HepG2 (cell line): ENCODE measurements at regions of chr9 and their contacts with region 1.

Region 1: GRCh38 chr9:34072868-34073590 is 24.3 kb upstream of the UBAP2 start:
- DNase-seq: peak; percentile 94
- ATAC-seq: peak; percentile 89
- H3K4me3 ChIP-seq: peak overlapping the region; percentile 17 to 57 (median 18); a peak in 5 of 6 replicates
- H3K27ac ChIP-seq: peak overlapping the region; percentile 69
- H3K4me1 ChIP-seq: peaks cover 49% of the 10 kb centered on the region
- H3K27me3 ChIP-seq: no peaks in the 10 kb centered on the region
- CTCF ChIP-seq: peak; percentile 7; the same call in 1 of the 2 replicates
- EP300 ChIP-seq: no peak
- POLR2A ChIP-seq: peak in 1 of 2 experiments; percentile 37; a peak in 2 of 4 replicates
- RAD21 ChIP-seq: no peak

Region 2: GRCh38 chr9:33934188-33934878 is 138.7 kb before region 1 on chr9:
- CTCF ChIA-PET with region 1: no interaction called
- POLR2A ChIA-PET with region 1: interaction called, 11 read pairs
- in situ Hi-C with region 1: no loop called
- intact Hi-C with region 1: no loop called
- DNase-seq: peak; percentile 73
- ATAC-seq: peak; percentile 66
- H3K4me3 ChIP-seq: no peak overlapping the region
- H3K27ac ChIP-seq: peak overlapping the region; percentile 58
- H3K4me1 ChIP-seq: peaks cover 71% of the 10 kb centered on the region
- H3K27me3 ChIP-seq: no peaks in the 10 kb centered on the region
- CTCF ChIP-seq: no peak
- EP300 ChIP-seq: peak in 1 of 2 experiments; percentile 83; a peak in 2 of 4 replicates
- POLR2A ChIP-seq: no peak
- RAD21 ChIP-seq: no peak

Region 3: DNA sequence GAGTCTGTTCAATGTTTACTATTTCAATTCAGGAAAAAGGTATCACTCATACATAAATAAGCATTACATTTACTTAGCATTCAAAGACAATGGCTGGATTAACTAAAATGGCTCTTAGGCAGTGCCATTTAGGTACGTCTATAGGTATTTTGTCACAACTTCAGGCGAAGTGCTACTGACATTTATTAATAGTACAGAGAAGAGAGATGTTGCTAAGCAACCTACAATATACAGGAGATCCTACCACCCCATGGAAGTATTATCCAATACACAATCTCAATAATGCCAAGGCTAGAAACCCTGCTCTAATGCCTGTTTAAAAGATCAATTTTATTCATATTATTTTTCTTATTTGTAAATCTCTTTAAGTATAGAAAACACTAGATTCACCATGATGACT is 100.3 kb before region 1 on chr9:
- CTCF ChIA-PET with region 1: no interaction called
- POLR2A ChIA-PET with region 1: no interaction called
- in situ Hi-C with region 1: no loop called
- intact Hi-C with region 1: loop called (anchors 1 kb)
- DNase-seq: no peak
- ATAC-seq: no peak
- H3K4me3 ChIP-seq: no peak overlapping the region
- H3K27ac ChIP-seq: no peak overlapping the region
- H3K4me1 ChIP-seq: peaks cover 6% of the 10 kb centered on the region; the same call in 1 of the 2 replicates
- H3K27me3 ChIP-seq: no peaks in the 10 kb centered on the region
- CTCF ChIP-seq: no peak
- EP300 ChIP-seq: no peak
- POLR2A ChIP-seq: no peak
- RAD21 ChIP-seq: no peak

Region 4: DNA sequence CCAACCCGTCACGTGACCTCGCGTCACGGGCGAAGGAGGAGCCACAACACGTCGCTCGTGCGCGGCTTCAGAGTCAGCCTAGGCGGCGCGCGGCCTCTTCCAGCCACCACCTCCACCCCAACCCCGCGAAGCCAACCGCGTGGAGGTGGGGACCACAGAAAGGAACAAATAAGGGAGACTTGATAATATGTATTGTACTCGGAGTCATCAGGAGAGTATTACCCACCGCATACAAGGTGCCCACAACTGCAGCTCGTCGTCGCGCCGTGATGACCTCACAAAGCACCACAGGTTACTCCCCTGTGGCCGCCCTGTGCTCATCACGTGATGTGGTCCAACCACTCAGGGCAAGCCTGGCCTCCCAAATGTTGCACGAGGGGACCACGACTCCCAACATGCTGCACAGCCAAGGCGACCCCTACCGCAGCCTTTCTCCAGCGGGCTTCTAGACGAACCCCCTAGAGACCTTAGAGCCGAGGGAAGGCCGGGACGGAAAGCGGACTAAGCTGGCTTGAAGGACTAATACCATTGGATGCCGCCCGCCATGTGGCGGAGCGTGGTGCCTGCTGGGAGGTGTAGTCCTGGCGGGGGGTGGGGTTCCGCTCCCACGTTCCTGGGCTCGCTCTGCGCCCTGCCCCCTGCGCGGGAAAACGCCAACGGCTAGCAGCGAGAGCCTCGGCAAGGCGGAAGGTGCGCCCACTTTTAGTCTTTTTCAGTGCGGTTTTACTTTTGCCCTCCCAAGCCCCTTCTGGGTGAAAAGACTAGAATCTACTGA is 23.9 kb before region 1 on chr9:
- CTCF ChIA-PET with region 1: no interaction called
- POLR2A ChIA-PET with region 1: interaction called, 63 read pairs
- in situ Hi-C with region 1: no loop called
- intact Hi-C with region 1: no loop called
- DNase-seq: peak; percentile 96
- ATAC-seq: peak; percentile 93
- H3K4me3 ChIP-seq: peak overlapping the region; percentile 92 to 94 (median 94)
- H3K27ac ChIP-seq: peak overlapping the region; percentile 90
- H3K4me1 ChIP-seq: peaks cover 31% of the 10 kb centered on the region
- H3K27me3 ChIP-seq: no peaks in the 10 kb centered on the region; a peak in 1 of 5 replicates
- CTCF ChIP-seq: peak; percentile 22; the same call in 1 of the 2 replicates
- EP300 ChIP-seq: 0 out of 4 replicates have a peak, but pooled peaks of 1 of the 2 experiments have one; percentile 13
- POLR2A ChIP-seq: peak; percentile 70 to 95
- RAD21 ChIP-seq: peak; percentile 21; the same call in 1 of the 2 replicates